ENCODE measurements at regions of chr16 and their contacts with region 1.

Region 1: GRCh38 chr16:62392698-62393097 is 356.5 kb upstream of the CDH8 start:
- DNase-seq: no peak
- H3K4me3 ChIP-seq: no peak overlapping the region
- H3K27ac ChIP-seq: no peak overlapping the region
- H3K4me1 ChIP-seq: no peaks in the 10 kb centered on the region
- H3K27me3 ChIP-seq: no peaks in the 10 kb centered on the region
- CTCF ChIP-seq: no peak

Region 2: DNA sequence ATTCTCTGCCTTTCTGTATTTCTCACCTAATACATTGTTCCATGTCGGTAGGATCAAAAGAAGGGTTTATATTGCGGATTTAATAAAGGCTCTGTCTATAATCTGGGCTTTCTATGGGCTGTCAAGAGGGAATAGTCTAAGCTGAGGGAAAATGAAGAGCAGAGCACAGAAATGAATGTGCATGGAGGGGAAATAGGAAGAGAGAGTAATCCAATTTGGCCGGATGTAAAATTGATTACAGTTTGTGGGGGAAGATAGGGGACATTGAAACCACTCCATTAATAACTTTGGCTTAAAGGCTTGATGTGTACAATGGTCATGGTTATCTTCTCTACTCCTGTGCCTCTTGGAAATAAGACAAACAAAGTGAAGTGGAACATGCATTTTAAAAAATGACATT is 22.3 kb before region 1 on chr16:
- intact Hi-C with region 1: loop called (anchors 1 kb)
- DNase-seq: no peak
- H3K4me3 ChIP-seq: no peak overlapping the region
- H3K27ac ChIP-seq: no peak overlapping the region
- H3K4me1 ChIP-seq: no peaks in the 10 kb centered on the region
- H3K27me3 ChIP-seq: no peaks in the 10 kb centered on the region
- CTCF ChIP-seq: no peak

Region 3: DNA sequence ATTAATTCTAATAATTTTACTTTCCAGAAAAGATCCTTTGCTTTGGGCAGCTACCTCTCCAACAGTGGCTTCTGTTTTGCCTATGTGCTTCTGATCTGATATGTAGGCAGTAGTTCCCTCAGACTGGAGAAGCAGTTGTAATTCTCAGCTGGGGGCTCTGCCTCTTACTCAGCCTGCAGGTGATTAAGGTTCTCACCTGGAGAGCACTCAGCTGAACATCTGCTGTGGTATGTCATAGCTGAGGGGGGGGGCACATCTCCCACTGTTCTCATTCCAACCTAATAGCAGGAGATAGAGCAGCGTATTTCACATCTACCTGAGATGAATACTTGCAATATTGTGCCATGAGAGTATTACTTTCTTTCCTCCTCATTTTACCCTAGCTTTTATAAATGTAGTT is 155.4 kb after region 1 on chr16:
- intact Hi-C with region 1: no loop called
- DNase-seq: no peak
- H3K4me3 ChIP-seq: no peak overlapping the region
- H3K27ac ChIP-seq: no peak overlapping the region
- H3K4me1 ChIP-seq: no peaks in the 10 kb centered on the region
- H3K27me3 ChIP-seq: no peaks in the 10 kb centered on the region
- CTCF ChIP-seq: no peak

Measured in tibial artery (tissue), 4 donors.